Motor neuron (in vitro differentiated cells): ENCODE measurements at regions of chr2 and their contacts with region 1.

Region 1: DNA sequence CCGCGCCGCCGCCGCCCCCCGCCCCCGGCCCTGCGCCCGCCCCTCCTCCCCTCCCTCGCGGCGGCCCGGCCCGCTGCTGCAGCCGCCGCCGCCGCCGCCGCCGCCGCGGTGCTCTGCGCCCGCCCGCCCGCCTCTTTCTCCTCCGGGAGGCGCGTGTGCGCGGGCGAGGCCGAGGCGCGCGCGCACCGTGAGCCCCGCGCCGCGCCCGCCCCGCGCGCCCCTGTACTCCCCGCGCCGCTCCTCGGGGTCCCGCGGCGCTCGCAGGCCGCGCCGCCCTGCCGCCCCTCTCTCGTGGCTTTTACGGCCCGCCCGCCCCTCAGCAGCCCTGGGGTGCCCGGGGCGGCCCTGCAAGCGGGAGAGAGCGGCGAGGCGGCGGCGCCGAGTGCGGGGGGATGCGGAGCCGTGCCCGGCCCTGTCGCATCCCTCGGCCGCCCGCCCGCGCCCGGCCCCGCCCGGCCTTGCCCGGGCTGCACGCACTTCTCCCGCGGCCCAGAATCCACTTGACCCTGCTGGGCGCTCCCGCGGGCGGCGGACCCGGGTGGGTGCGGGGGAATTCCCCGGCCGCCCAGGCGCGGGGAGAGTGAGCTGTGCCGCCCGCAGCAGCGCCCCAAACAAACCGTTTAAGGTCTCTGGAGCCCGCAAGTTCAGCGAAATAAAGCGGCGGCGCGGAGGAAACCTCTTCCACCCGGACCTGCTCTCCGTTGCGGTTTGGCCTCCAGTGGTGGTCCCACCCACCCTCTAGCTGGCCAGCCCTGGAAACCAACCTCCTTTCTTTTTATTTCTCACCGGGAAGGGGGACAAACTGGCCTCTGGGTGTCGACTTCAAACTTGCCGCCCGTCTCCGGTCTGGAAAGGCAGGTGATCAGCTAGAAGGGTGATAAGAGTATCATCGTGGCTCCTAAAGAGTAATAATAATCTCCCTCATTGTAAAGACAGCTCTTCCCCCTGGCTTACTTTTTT is 37.4 kb downstream of the AFF3 start:
- ATAC-seq: peak; percentile 55 to 78 (median 73)
- H3K4me3 ChIP-seq: peak overlapping the region; percentile 43 to 96 (median 86)
- H3K27ac ChIP-seq: peak overlapping the region; percentile 77 to 84
- H3K4me1 ChIP-seq: peaks cover 35 to 39% of the 10 kb centered on the region in 2 donors

Region 2: DNA sequence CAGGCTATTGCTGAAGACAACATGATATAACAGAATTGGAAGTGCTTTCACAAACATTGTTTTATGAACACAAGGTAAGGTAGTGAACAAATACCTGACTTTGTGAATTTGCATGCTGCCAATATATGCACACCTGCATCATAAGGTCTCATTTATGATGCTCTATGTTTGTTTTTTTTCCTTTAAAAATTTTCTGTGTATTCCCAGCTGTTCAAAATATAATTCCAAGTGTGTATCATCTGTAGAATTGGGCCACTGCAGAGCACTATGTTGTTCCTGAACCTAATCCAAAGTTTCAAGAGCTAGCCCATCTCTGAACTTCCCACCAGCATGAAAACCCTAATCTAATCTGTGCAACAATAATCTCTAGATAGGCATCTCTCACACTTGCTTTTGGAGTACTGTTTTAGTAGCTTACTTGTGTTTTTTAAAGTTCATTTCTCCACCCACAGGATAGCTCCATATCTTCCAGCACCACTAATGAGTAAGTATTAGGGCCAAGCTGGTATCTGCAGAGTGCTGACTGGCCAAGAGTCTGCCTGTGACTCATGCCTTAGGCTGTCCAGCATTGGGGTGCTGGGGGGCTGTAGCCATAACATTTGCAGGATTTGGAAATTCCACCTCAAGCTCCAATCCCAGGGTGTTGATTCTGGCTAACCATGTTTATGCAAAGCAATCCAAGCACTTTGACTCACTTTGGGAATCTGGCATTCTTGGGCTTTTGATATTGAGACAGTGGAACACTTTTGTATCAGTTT is 407.0 kb before region 1 on chr2:
- in situ Hi-C with region 1: no loop called
- ATAC-seq: peak in 2 of 8 experiments; percentile 65
- H3K4me3 ChIP-seq: no peak overlapping the region
- H3K27ac ChIP-seq: no peak overlapping the region
- H3K4me1 ChIP-seq: peaks cover 13 to 15% of the 10 kb centered on the region in 2 donors

Region 3: GRCh38 chr2:100214265-100214971 is 109.4 kb after region 1 on chr2:
- in situ Hi-C with region 1: loop called in 1 of 9 experiments (anchors 25 kb)
- ATAC-seq: no peak
- H3K4me3 ChIP-seq: no peak overlapping the region
- H3K27ac ChIP-seq: no peak overlapping the region
- H3K4me1 ChIP-seq: peaks cover 0 to 5% of the 10 kb centered on the region in 2 donors

Region 4: DNA sequence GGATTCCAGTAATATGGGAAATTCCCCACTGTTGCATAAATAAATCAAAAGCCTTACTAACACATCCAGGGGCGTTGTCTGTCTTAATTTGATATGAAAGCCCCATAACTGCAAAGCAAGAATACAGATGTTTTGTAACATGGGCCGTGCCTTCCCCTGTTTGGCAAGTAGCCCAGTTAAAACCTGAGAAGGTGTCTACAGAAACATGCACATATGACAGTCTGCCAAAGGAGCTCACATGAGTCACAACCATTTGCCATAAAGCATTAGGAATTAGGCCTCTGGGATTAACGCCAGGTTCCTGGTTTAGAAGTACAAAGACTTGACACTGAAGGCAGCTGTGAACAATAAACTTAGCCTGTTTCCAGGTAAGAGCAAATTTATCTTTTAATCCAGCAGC is 260.4 kb after region 1 on chr2:
- in situ Hi-C with region 1: no loop called
- ATAC-seq: peak in 2 of 8 experiments; percentile 46 to 48
- H3K4me3 ChIP-seq: no peak overlapping the region
- H3K27ac ChIP-seq: no peak overlapping the region
- H3K4me1 ChIP-seq: no peaks in the 10 kb centered on the region